Sciatic nerve (tissue), 2 donors: ENCODE measurements at regions of chr15 and their contacts with region 1.

Region 1: DNA sequence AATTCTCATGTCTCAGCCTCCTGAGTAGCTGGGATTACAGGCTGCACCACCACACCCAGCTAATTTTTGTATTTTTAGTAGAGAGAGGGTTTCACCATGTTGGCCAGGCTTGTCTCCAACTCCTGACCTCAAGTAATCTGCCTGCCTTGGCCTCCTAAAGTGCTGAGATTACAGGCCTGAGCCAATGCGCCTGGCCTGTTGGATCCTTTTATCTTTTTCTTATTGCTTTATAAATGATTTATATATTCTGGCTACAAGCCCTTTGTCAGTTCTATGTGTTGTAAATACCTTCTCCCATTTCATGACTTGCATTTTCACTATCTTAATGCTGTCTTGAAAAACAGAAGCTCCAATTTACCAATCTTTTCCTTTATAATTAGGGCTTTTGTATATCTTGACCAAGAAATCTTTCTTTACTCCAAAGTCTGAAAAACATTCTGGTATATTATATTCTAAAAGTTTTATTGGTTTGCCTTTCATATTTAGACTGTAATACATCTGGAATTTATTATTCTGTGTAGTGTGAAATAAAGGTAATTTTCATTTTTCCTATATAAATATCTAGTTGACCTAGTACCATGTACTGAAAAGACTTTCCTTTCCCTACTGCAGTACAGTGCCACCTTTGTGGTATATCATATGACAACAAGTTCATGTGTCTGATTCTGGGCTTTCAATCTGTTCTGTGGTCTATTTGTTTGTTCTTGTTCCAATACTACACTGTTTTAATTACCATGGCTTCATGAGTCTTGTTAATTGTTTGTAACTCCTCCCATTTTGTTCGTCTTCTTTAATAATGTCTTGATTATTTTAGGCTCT is 52.9 kb upstream of the RNU6-1 start:
- DNase-seq: no peak
- ATAC-seq: peak; percentile 74

Region 2: DNA sequence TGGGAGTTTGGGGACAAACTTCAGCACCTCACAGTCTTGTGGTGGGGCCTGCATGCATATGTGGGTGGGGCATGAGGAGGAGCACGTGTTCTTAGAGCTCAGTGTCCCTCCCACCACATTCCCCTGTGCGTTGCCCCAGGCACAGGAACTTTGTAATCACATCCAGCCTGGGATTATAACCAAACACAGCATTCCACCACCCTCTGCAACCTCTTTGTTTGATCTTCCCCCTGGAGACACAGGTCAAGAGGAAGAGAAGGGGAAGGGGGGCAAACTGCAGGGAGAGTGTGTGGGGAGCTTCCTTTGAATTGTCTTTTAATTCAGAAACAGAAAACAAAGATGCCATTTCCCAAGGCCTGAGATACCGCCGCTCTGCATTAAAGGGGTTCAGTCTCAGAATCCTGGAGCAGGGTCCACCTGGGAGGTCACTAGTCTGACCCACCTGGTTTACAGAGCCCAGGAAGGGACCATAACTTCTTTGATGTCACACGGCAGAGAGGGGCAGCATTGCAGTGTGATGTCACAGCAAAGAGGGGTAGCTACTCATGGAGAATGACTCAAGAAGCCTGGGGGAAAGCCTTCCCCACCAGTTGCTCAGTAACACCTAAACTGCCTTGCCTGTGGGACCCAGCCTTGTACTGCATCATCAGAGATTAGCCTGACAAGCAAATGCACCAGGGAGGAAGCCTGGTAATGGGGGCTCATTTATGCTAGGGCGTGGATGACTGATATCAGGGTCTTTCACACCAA is 53.4 kb after region 1 on chr15:
- intact Hi-C with region 1: loop called (anchors 10 kb)
- DNase-seq: no peak
- ATAC-seq: peak; percentile 93